ACHN (cell line): ENCODE measurements at regions of chr14 and their contacts with region 1.

Region 1: GRCh38 chr14:35159742-35160409 is 37.5 kb downstream of the PRORP start:
- DNase-seq: peak; percentile 83

Region 2: DNA sequence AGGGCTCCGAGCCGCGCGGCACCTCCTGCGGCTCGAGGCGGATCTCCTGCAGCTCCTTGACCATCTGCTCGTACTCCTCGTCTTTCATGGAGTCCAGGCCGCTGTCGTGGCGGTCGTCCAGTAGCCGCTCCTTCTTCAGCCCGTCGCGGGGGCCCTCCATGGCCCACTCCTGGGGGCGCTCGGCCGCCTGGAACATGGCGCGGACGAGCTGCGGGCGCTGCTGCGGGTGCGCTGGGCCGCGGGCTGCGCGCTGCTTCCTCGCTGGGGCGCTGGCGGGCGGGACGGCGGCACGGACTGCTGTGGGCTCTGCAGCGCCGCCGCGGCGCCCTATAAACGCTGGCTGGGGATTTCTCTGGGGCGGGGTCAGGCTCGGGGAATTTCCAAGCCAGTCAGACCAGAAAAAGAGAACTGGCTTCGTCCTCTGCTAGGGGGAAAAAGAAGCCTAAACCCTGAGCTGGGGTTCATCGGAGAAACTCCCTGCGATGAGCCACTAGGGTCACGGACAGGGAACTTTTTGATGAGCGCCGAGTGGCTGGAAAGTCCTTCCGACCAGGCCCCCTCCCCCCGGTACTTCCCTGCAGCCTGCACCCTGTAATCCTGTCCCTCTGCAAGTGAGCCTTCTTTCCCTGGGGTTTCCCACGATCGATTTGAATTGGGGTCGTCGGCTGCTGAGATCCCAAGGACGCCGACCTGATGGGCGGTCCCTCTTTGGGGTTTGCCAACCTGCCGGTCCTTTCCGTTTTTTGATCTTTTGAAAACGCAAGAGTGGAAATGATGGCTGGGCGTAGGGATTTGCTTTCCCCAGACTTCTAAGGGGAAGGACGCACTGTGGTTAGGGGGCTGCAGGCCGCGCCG is 244.8 kb after region 1 on chr14 and contains the start of gene NFKBIA:
- in situ Hi-C with region 1: loop called (anchors 25 kb)
- DNase-seq: peak; percentile 82